Heart right ventricle (tissue), 16 donors: ENCODE measurements at regions of chr4 and their contacts with region 1.

Region 1: DNA sequence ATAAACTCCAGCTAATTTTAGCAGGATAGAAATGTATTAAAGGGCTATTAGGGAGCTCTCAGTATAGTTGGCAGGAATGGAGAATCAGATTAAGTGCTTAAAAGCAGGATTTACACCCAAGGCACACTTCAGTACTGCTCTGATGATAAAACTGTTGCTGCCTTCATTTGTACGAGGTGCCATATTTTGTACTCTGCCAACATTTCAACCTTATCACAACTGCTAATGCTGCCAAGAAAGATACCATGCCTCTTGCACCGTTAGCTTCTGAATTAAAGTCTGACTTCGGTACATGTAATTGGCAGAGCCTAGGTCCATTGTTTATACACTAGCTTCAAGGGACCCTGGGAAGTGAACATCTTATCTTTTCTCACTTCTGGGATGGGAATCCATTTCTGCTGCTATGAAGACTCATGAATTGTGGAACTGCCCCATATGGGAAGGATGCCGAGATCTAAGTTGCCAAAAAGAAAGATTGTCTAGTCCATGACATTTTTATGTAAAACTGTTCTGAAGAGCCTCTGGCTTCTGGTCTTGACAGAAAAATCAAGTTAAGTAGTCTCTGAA is 624.0 kb upstream of the IGFBP7 start:
- DNase-seq: peak in 1 of 2 donors; percentile 20
- ATAC-seq: peak; percentile 82 to 100 (median 96)
- H3K4me3 ChIP-seq: no peak overlapping the region
- H3K27ac ChIP-seq: no peak overlapping the region
- H3K4me1 ChIP-seq: peaks cover 0 to 7% (median 0%) of the 10 kb centered on the region in 9 donors
- H3K27me3 ChIP-seq: no peaks in the 10 kb centered on the region
- CTCF ChIP-seq: no peak

Region 2: DNA sequence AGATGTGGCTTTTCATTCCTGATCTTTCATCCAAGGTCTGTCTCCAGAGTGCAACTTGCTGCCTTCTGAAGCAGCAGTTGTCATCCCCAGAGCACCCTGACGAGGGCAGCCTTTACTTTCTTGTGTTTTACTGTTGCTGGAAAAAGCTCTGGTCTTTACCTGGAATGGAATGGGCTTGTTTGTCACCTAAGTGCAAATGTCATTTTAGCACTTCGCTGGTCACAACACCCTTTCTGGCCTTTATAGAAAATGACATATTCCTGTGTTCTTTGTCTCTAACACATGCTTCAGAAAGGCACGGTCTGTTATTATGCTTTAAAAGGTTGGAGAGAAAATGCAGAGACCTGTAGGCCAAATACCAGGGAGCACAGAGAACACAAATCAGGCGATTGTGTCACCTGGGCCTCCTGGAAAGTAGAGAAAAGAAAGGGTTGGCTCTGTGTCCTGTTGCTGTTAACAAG is 291.3 kb before region 1 on chr4:
- intact Hi-C with region 1: loop called in 3 of 10 experiments (anchors 2 to 10 kb)
- DNase-seq: peak; percentile 24 to 44
- ATAC-seq: peak; percentile 68 to 85 (median 78)
- H3K4me3 ChIP-seq: no peak overlapping the region
- H3K27ac ChIP-seq: peak overlapping the region in 1 of 10 donors; percentile 7
- H3K4me1 ChIP-seq: peaks cover 0 to 9% (median 0%) of the 10 kb centered on the region in 9 donors
- H3K27me3 ChIP-seq: peaks cover 0 to 2% (median 0%) of the 10 kb centered on the region in 7 donors
- CTCF ChIP-seq: peak; percentile 36 to 82 (median 73)

Region 3: GRCh38 chr4:57591073-57591472 is 143.1 kb before region 1 on chr4:
- intact Hi-C with region 1: loop called in 1 of 10 experiments (anchors 10 kb)
- DNase-seq: no peak
- ATAC-seq: no peak
- H3K4me3 ChIP-seq: no peak overlapping the region
- H3K27ac ChIP-seq: no peak overlapping the region
- H3K4me1 ChIP-seq: no peaks in the 10 kb centered on the region
- H3K27me3 ChIP-seq: peaks cover 0 to 5% (median 0%) of the 10 kb centered on the region in 7 donors
- CTCF ChIP-seq: no peak

Region 4: GRCh38 chr4:57763070-57763612 is 29.0 kb after region 1 on chr4:
- intact Hi-C with region 1: no loop called
- DNase-seq: no peak
- ATAC-seq: no peak
- H3K4me3 ChIP-seq: no peak overlapping the region
- H3K27ac ChIP-seq: no peak overlapping the region
- H3K4me1 ChIP-seq: no peaks in the 10 kb centered on the region
- H3K27me3 ChIP-seq: no peaks in the 10 kb centered on the region
- CTCF ChIP-seq: no peak

Region 5: GRCh38 chr4:57854748-57855147 is 120.6 kb after region 1 on chr4:
- intact Hi-C with region 1: loop called in 1 of 10 experiments (anchors 10 kb)
- DNase-seq: no peak
- ATAC-seq: no peak
- H3K4me3 ChIP-seq: peak overlapping the region in 4 of 10 donors; percentile 11 to 29 (median 13)
- H3K27ac ChIP-seq: no peak overlapping the region
- H3K4me1 ChIP-seq: peaks cover 0 to 13% (median 0%) of the 10 kb centered on the region in 9 donors
- H3K27me3 ChIP-seq: no peaks in the 10 kb centered on the region
- CTCF ChIP-seq: no peak

Region 6: GRCh38 chr4:57877047-57877458 is 142.9 kb after region 1 on chr4:
- intact Hi-C with region 1: loop called in 1 of 10 experiments (anchors 10 kb)
- DNase-seq: peak in 1 of 2 donors; percentile 10
- ATAC-seq: peak; percentile 58 to 96 (median 88)
- H3K4me3 ChIP-seq: no peak overlapping the region
- H3K27ac ChIP-seq: peak overlapping the region; percentile 7 to 86 (median 70)
- H3K4me1 ChIP-seq: peaks cover 0 to 14% (median 0%) of the 10 kb centered on the region in 9 donors
- H3K27me3 ChIP-seq: no peaks in the 10 kb centered on the region
- CTCF ChIP-seq: no peak